ENCODE measurements at regions of chr12 and their contacts with region 1.

Region 1: GRCh38 chr12:24852420-24852819 is 96.5 kb downstream of the BCAT1 start:
- DNase-seq: no peak
- ATAC-seq: no peak
- H3K4me3 Mint-ChIP-seq: no peak overlapping the region
- H3K27ac Mint-ChIP-seq: no peak overlapping the region
- H3K4me1 Mint-ChIP-seq: no peaks in the 10 kb centered on the region
- H3K27me3 Mint-ChIP-seq: no peaks in the 10 kb centered on the region

Region 2: GRCh38 chr12:24778486-24779304 is 73.7 kb before region 1 on chr12:
- CTCF ChIA-PET with region 1: no interaction called
- POLR2A ChIA-PET with region 1: no interaction called
- DNase-seq: no peak
- ATAC-seq: no peak
- H3K4me3 Mint-ChIP-seq: no peak overlapping the region
- H3K27ac Mint-ChIP-seq: no peak overlapping the region
- H3K4me1 Mint-ChIP-seq: no peaks in the 10 kb centered on the region
- H3K27me3 Mint-ChIP-seq: peaks cover 14% of the 10 kb centered on the region

Region 3: DNA sequence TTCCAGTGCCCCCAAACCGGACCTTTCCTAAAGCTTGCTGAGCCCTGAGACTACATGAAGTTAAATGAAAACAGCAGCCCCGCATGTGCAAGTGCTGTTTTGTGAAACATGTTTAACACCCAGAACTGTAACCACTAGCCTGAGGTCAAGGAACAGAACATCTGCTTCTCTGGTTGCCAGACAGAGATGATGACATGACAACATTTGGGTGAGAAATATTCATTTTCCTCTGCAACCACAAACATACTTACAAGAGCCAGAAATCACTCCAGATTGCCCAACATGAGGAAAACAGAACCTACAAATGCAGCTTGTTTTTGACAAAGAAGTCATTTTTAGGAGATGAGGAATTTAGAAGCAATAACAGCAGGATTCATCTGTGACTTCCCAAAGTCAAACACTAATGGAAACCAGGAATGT is 13.9 kb before region 1 on chr12:
- CTCF ChIA-PET with region 1: interaction called, 27 read pairs
- POLR2A ChIA-PET with region 1: no interaction called
- DNase-seq: peak; percentile 32
- ATAC-seq: peak; percentile 27
- H3K4me3 Mint-ChIP-seq: no peak overlapping the region
- H3K27ac Mint-ChIP-seq: peak overlapping the region; percentile 9
- H3K4me1 Mint-ChIP-seq: peaks cover 25% of the 10 kb centered on the region
- H3K27me3 Mint-ChIP-seq: no peaks in the 10 kb centered on the region

Measured in activated CD8-positive, alpha-beta T cell treated with anti-CD3 and anti-CD28 coated beads, Interleukin-2, amount 10 ng/mL, durations not matched to agents 7 days and 5 days (primary cell).